ENCODE measurements at regions of chr7 and their contacts with region 1.

Region 1: GRCh38 chr7:56063882-56064625 is at the start of gene SUMF2:
- DNase-seq: peak; percentile 93 to 96
- H3K4me3 ChIP-seq: peak within 1 kb of the TSS; percentile 88
- H3K4me3 Mint-ChIP-seq: peak within 1 kb of the TSS; percentile 75
- H3K27ac Mint-ChIP-seq: peak within 1 kb of the TSS; percentile 88
- H3K4me1 ChIP-seq: peaks cover 34% of the 10 kb centered on the region
- H3K4me1 Mint-ChIP-seq: peaks cover 23% of the 10 kb centered on the region
- H3K27me3 ChIP-seq: no peaks in the 10 kb centered on the region
- H3K27me3 Mint-ChIP-seq: no peaks in the 10 kb centered on the region
- CTCF ChIP-seq: peak in 1 of 2 experiments; percentile 51
- total RNA-seq, gene SUMF2: 150 and 172 TPM in 2 replicates

Region 2: GRCh38 chr7:55185941-55186609 is 878.0 kb before region 1 on chr7:
- CTCF ChIA-PET with region 1: no interaction called
- POLR2A ChIA-PET with region 1: interaction called, 16 read pairs
- intact Hi-C with region 1: no loop called
- DNase-seq: peak; percentile 42 to 76
- H3K4me3 ChIP-seq: no peak overlapping the region
- H3K4me3 Mint-ChIP-seq: peak overlapping the region; percentile 91
- H3K27ac Mint-ChIP-seq: peak overlapping the region; percentile 85
- H3K4me1 ChIP-seq: peaks cover 77% of the 10 kb centered on the region
- H3K4me1 Mint-ChIP-seq: peaks cover 65% of the 10 kb centered on the region
- H3K27me3 ChIP-seq: no peaks in the 10 kb centered on the region
- H3K27me3 Mint-ChIP-seq: no peaks in the 10 kb centered on the region
- CTCF ChIP-seq: no peak

Region 3: GRCh38 chr7:55983537-55983936 is 80.5 kb before region 1 on chr7:
- CTCF ChIA-PET with region 1: no interaction called
- POLR2A ChIA-PET with region 1: no interaction called
- intact Hi-C with region 1: no loop called
- DNase-seq: no peak
- H3K4me3 ChIP-seq: no peak overlapping the region
- H3K4me3 Mint-ChIP-seq: no peak overlapping the region
- H3K27ac Mint-ChIP-seq: no peak overlapping the region
- H3K4me1 ChIP-seq: peaks cover 8% of the 10 kb centered on the region
- H3K4me1 Mint-ChIP-seq: no peaks in the 10 kb centered on the region
- H3K27me3 ChIP-seq: no peaks in the 10 kb centered on the region
- H3K27me3 Mint-ChIP-seq: no peaks in the 10 kb centered on the region
- CTCF ChIP-seq: no peak

Region 4: DNA sequence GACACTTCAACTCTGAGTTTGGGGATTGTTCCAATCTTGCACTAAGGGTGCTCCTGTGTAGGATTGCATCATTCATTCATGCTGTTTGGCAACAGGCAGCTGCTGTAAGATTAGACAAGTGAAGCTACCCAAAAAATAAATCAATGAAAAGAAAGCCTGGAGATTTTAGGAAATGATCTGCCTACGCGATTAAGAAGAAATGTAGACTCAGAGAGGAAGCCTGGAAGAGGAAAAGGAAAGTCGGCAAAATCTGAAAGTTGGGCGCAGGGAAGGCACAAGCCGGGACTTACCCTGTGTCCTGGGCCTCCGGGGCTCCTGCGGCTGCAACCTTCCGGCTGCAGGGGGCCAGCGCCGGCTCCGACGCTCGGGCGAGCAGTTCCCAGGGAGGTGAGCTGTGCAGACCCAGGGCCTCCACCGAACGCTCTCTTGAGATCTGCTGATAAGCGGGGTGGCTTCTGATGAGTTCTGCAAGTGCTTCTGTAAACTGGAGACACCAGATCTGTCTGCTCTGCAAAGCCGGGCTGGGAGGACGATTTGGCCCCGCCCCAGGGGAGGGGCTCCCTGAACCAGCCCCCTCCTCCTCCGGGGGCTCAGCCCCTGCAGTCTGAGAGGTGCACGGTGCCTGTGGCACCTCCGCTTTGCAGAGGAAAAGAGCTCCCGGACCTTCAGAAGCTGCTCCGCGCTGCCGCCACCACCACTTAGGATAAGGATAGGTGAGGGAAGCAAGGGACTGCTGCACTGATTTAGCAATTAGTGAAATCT is 30.2 kb before region 1 on chr7:
- CTCF ChIA-PET with region 1: interaction called, 42 read pairs
- POLR2A ChIA-PET with region 1: interaction called, 19 read pairs
- intact Hi-C with region 1: loop called (anchors 1 kb)
- DNase-seq: peak; percentile 96
- H3K4me3 ChIP-seq: peak overlapping the region; percentile 80
- H3K4me3 Mint-ChIP-seq: peak overlapping the region; percentile 85
- H3K27ac Mint-ChIP-seq: peak overlapping the region; percentile 89
- H3K4me1 ChIP-seq: peaks cover 29% of the 10 kb centered on the region
- H3K4me1 Mint-ChIP-seq: peaks cover 21% of the 10 kb centered on the region
- H3K27me3 ChIP-seq: no peaks in the 10 kb centered on the region
- H3K27me3 Mint-ChIP-seq: no peaks in the 10 kb centered on the region
- CTCF ChIP-seq: peak; percentile 31 to 55

Region 5: DNA sequence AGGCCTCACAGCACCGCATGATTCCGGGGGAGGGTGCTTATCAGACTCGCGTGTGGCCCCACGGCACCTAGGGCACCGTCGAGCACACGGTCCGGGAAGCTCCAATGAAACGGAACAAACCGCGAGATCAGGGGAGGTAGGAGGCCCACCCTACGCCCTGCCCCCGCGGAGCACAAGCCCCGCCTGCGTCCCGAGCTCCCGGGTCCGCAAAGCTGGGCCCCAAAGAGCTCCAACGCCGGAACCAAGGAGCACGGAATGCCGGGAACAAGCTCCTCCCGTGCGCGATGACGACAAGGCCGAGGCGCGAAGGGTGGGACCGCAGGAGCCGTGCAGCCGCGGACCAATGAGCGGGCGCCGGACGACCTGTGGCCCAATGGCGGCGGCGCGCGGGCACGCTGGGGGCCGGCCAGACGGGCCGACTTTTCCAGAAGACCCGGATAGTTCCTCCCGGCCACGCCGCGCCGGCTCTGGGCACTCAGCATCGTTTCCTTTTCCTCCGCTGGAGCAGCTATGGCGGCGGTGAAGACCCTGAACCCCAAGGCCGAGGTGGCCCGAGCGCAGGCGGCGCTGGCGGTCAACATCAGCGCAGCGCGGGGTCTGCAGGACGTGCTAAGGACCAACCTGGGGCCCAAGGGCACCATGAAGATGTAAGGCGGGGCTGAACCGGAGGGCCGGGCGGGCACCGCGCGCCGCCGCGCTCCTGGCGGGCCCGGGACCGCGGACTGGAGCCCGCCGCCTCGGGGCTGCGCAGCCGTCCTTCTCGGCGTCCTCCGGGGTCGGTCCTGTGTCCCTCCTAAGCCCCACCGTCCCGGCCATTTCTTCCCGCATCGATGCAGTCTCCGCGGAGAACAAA is 12.5 kb before region 1 on chr7 and contains the starts of genes CCT6A and PSPH:
- CTCF ChIA-PET with region 1: interaction called, 12 read pairs
- POLR2A ChIA-PET with region 1: interaction called, 53 read pairs
- intact Hi-C with region 1: loop called (anchors 1 kb)
- DNase-seq: peak; percentile 99
- H3K4me3 ChIP-seq: peak within 1 kb of the TSS; percentile 59
- H3K4me3 Mint-ChIP-seq: peak within 1 kb of the TSS; percentile 92
- H3K27ac Mint-ChIP-seq: peak within 1 kb of the TSS; percentile 91
- H3K4me1 ChIP-seq: peaks cover 45% of the 10 kb centered on the region
- H3K4me1 Mint-ChIP-seq: peaks cover 4% of the 10 kb centered on the region
- H3K27me3 ChIP-seq: no peaks in the 10 kb centered on the region
- H3K27me3 Mint-ChIP-seq: no peaks in the 10 kb centered on the region
- CTCF ChIP-seq: no peak
- total RNA-seq, gene CCT6A: 242 and 248 TPM in 2 replicates
- total RNA-seq, gene PSPH: 107 and 111 TPM in 2 replicates

Region 6: GRCh38 chr7:56081626-56082340 is 17.7 kb after region 1 on chr7:
- CTCF ChIA-PET with region 1: no interaction called
- POLR2A ChIA-PET with region 1: no interaction called
- intact Hi-C with region 1: no loop called
- DNase-seq: no peak
- H3K4me3 ChIP-seq: no peak overlapping the region
- H3K4me3 Mint-ChIP-seq: no peak overlapping the region
- H3K27ac Mint-ChIP-seq: no peak overlapping the region
- H3K4me1 ChIP-seq: no peaks in the 10 kb centered on the region
- H3K4me1 Mint-ChIP-seq: no peaks in the 10 kb centered on the region
- H3K27me3 ChIP-seq: no peaks in the 10 kb centered on the region
- H3K27me3 Mint-ChIP-seq: no peaks in the 10 kb centered on the region
- CTCF ChIP-seq: no peak

Region 7: GRCh38 chr7:56092789-56093531 is 28.9 kb after region 1 on chr7 and contains the start of gene PHKG1:
- CTCF ChIA-PET with region 1: no interaction called
- POLR2A ChIA-PET with region 1: no interaction called
- intact Hi-C with region 1: no loop called
- DNase-seq: peak in 1 of 2 experiments; percentile 26
- H3K4me3 ChIP-seq: no peak within 1 kb of the TSS
- H3K4me3 Mint-ChIP-seq: no peak within 1 kb of the TSS
- H3K27ac Mint-ChIP-seq: no peak within 1 kb of the TSS
- H3K4me1 ChIP-seq: no peaks in the 10 kb centered on the region
- H3K4me1 Mint-ChIP-seq: no peaks in the 10 kb centered on the region
- H3K27me3 ChIP-seq: no peaks in the 10 kb centered on the region
- H3K27me3 Mint-ChIP-seq: no peaks in the 10 kb centered on the region
- CTCF ChIP-seq: peak; percentile 29 to 40
- total RNA-seq, gene PHKG1: 1.1 and 1.6 TPM in 2 replicates

Region 8: GRCh38 chr7:56290548-56290947 is 226.5 kb after region 1 on chr7:
- CTCF ChIA-PET with region 1: no interaction called
- POLR2A ChIA-PET with region 1: no interaction called
- intact Hi-C with region 1: no loop called
- DNase-seq: no peak
- H3K4me3 ChIP-seq: no peak overlapping the region
- H3K4me3 Mint-ChIP-seq: no peak overlapping the region
- H3K27ac Mint-ChIP-seq: no peak overlapping the region
- H3K4me1 ChIP-seq: no peaks in the 10 kb centered on the region
- H3K4me1 Mint-ChIP-seq: no peaks in the 10 kb centered on the region
- H3K27me3 ChIP-seq: no peaks in the 10 kb centered on the region
- H3K27me3 Mint-ChIP-seq: no peaks in the 10 kb centered on the region
- CTCF ChIP-seq: no peak